ENCODE measurements at regions of chr5 and their contacts with region 1.

Region 1: DNA sequence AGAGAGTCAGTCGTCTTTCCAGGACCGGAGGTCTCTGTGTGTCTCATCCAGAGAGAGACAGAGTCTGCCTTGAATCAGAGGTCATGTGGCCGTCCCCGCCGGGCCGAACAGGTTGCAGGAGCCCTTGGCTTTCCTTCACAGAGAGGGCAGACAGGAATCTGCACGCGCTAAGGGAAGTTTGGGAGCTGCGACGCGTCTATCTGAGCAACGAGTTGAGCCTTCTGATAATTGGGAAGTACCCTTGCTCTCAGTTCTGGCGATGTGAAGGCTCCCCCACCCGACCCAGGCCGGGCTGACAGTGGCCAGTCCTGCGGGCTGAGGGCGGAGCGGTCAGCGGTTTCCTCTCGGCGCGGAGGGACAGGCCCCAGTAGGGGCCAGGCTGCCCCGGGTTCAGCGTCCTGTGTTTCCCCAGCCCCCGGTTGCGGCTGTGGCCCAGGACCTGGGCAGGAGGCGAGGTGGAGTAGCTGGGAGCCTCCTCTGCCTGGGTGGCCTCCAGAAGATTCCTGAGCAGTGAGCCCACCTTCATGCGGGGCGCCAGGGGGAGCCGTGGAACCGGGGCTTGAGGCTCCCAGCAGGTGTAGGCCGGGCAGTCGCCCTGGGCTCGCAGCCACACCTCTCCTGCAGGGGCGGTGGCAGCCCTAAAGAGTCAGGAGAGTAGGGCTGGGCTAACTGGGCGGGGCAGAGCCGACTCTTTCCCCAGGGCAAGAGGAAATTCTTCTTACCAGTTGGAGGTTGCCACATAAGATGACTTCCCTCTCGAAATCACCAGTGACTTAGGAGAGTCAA is 13.8 kb downstream of the NR2F1 start:
- DNase-seq: no peak
- H3K4me3 ChIP-seq: no peak overlapping the region
- H3K27ac ChIP-seq: no peak overlapping the region
- H3K4me1 ChIP-seq: no peaks in the 10 kb centered on the region
- H3K27me3 ChIP-seq: no peaks in the 10 kb centered on the region
- CTCF ChIP-seq: no peak
- EP300 ChIP-seq: no peak
- POLR2A ChIP-seq: no peak

Region 2: GRCh38 chr5:93789173-93790070 is 192.6 kb after region 1 on chr5:
- intact Hi-C with region 1: loop called in 1 of 4 experiments (anchors 10 kb)
- DNase-seq: no peak
- H3K4me3 ChIP-seq: no peak overlapping the region
- H3K27ac ChIP-seq: no peak overlapping the region
- H3K4me1 ChIP-seq: no peaks in the 10 kb centered on the region
- H3K27me3 ChIP-seq: no peaks in the 10 kb centered on the region
- CTCF ChIP-seq: no peak
- EP300 ChIP-seq: no peak
- POLR2A ChIP-seq: no peak

Measured in ovary (tissue), 10 donors.